Activated CD4-positive, alpha-beta T cell treated with anti-CD3 and anti-CD28 coated beads for 36 hours (primary cell): ENCODE measurements at regions of chr10 and their contacts with region 1.

Region 1: GRCh38 chr10:14185316-14186045 is 145.2 kb downstream of the FRMD4A start:
- DNase-seq: peak; percentile 73
- ATAC-seq: peak; percentile 92
- H3K4me3 Mint-ChIP-seq: peak overlapping the region; percentile 63
- H3K27ac Mint-ChIP-seq: peak overlapping the region; percentile 97
- H3K4me1 Mint-ChIP-seq: peaks cover 31% of the 10 kb centered on the region
- H3K27me3 Mint-ChIP-seq: peaks cover 29% of the 10 kb centered on the region

Region 2: DNA sequence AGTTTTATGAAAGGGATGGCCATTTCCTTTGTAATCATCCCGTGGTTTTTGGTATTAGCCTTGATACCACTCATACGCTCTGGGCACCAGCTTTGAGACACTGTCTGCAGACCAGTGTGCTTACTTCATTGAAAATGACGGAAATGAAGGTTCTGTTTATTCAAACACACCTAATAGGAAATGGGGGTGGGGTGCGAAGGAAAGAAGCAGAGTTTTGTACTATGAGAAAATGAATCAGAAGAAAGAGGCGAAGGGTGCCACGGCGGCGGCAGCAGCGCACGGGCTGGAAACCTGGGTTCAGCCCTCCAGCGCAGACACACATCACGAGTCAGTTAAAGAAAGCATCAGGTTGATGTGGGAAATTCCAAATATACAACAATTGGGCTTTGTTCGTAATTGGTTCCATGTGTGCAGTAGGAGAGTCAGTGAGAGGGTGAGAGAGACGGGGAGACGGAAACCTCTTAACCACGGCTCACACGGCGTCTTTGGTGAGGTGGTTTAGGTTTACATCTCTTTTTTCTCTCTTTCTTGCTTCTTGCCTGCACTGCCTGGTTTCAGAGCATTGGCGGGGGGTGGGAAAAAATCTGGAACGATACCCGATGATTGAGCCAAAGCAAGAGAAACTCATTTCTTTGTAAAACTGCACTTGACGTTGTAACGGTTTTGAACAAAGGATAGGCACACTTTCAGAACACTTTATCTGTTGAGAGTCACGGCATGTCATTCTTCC is 175.9 kb before region 1 on chr10:
- CTCF ChIA-PET with region 1: no interaction called
- POLR2A ChIA-PET with region 1: interaction called, 9 read pairs
- intact Hi-C with region 1: loop called (anchors 1 to 2 kb)
- DNase-seq: peak; percentile 84
- ATAC-seq: peak; percentile 88
- H3K4me3 Mint-ChIP-seq: peak overlapping the region; percentile 75
- H3K27ac Mint-ChIP-seq: peak overlapping the region; percentile 92
- H3K4me1 Mint-ChIP-seq: peaks cover 41% of the 10 kb centered on the region
- H3K27me3 Mint-ChIP-seq: peaks cover 3% of the 10 kb centered on the region

Region 3: GRCh38 chr10:14200698-14201544 is 15.4 kb after region 1 on chr10:
- CTCF ChIA-PET with region 1: interaction called, 35 read pairs
- POLR2A ChIA-PET with region 1: interaction called, 44 read pairs
- intact Hi-C with region 1: no loop called
- DNase-seq: peak; percentile 41
- ATAC-seq: no peak
- H3K4me3 Mint-ChIP-seq: no peak overlapping the region
- H3K27ac Mint-ChIP-seq: no peak overlapping the region
- H3K4me1 Mint-ChIP-seq: no peaks in the 10 kb centered on the region
- H3K27me3 Mint-ChIP-seq: peaks cover 7% of the 10 kb centered on the region

Region 4: GRCh38 chr10:14507176-14507575 is 321.7 kb after region 1 on chr10:
- CTCF ChIA-PET with region 1: no interaction called
- POLR2A ChIA-PET with region 1: interaction called, 12 read pairs
- intact Hi-C with region 1: no loop called
- DNase-seq: peak; percentile 58
- ATAC-seq: peak; percentile 50
- H3K4me3 Mint-ChIP-seq: peak overlapping the region; percentile 30
- H3K27ac Mint-ChIP-seq: peak overlapping the region; percentile 72
- H3K4me1 Mint-ChIP-seq: peaks cover 43% of the 10 kb centered on the region
- H3K27me3 Mint-ChIP-seq: no peaks in the 10 kb centered on the region

Region 5: GRCh38 chr10:14583252-14583651 is 397.8 kb after region 1 on chr10:
- CTCF ChIA-PET with region 1: no interaction called
- POLR2A ChIA-PET with region 1: interaction called, 13 read pairs
- intact Hi-C with region 1: no loop called
- DNase-seq: peak; percentile 92
- ATAC-seq: peak; percentile 71
- H3K4me3 Mint-ChIP-seq: peak overlapping the region; percentile 63
- H3K27ac Mint-ChIP-seq: peak overlapping the region; percentile 93
- H3K4me1 Mint-ChIP-seq: peaks cover 88% of the 10 kb centered on the region
- H3K27me3 Mint-ChIP-seq: no peaks in the 10 kb centered on the region

Region 6: GRCh38 chr10:14878266-14879054 is 693.0 kb after region 1 on chr10 and contains the start of gene SUV39H2:
- CTCF ChIA-PET with region 1: no interaction called
- POLR2A ChIA-PET with region 1: interaction called, 19 read pairs
- intact Hi-C with region 1: loop called in 1 of 2 experiments (anchors 5 kb)
- DNase-seq: peak; percentile 97
- ATAC-seq: peak; percentile 92
- H3K4me3 Mint-ChIP-seq: peak within 1 kb of the TSS; percentile 97
- H3K27ac Mint-ChIP-seq: peak within 1 kb of the TSS; percentile 93
- H3K4me1 Mint-ChIP-seq: peaks cover 37% of the 10 kb centered on the region
- H3K27me3 Mint-ChIP-seq: no peaks in the 10 kb centered on the region
- total RNA-seq, gene SUV39H2: 42.9 to 51.5 TPM